Activated CD4-positive, alpha-beta T cell treated with anti-CD3 and anti-CD28 coated beads, Interleukin-2, amount 10 ng/mL, durations not matched to agents 24 days and 14 days (primary cell): ENCODE measurements at regions of chr9 and their contacts with region 1.

Region 1: DNA sequence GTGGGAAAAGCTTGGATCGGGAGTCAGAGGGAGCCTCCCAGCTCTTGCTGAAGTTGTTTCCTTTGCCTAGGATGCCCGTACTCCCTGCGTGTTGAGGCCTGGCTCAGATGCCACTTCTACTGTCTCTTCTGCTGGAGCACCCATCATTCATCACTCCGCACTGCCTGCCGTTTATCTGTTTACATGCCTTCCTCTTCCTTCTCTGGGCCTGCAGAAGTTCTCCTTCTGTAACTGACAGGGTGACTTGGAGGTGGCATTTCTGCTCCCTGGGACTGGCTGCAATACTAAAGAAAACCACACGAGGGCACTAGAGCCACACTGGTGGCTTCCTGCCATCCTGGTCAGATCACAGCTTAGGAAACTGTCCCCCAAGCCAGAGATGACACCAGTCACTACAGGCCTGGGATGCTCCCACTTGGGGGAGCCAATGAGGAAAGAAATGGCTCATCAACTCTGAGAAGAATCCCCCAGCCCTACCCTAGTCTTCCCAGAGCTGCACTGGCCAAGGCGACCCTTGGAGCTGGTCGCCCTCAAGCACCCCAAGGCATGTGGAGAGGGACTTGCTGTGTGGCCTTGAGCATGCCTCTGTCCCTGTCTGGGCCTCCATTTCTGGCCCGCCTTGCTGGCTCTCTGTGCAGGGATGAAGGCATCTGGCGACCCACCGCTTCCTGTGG is 9.7 kb upstream of the SLC25A51 start:
- DNase-seq: peak; percentile 95
- H3K4me3 Mint-ChIP-seq: no peak overlapping the region
- H3K27ac Mint-ChIP-seq: no peak overlapping the region
- H3K4me1 Mint-ChIP-seq: peaks cover 5% of the 10 kb centered on the region
- H3K27me3 Mint-ChIP-seq: no peaks in the 10 kb centered on the region

Region 2: GRCh38 chr9:37784616-37785483 is 128.8 kb before region 1 on chr9 and contains the start of gene EXOSC3:
- intact Hi-C with region 1: no loop called
- DNase-seq: peak; percentile 97
- H3K4me3 Mint-ChIP-seq: peak within 1 kb of the TSS; percentile 98
- H3K27ac Mint-ChIP-seq: peak within 1 kb of the TSS; percentile 97
- H3K4me1 Mint-ChIP-seq: peaks cover 19% of the 10 kb centered on the region
- H3K27me3 Mint-ChIP-seq: no peaks in the 10 kb centered on the region
- total RNA-seq, gene EXOSC3: 104 and 109 TPM in 2 replicates

Region 3: DNA sequence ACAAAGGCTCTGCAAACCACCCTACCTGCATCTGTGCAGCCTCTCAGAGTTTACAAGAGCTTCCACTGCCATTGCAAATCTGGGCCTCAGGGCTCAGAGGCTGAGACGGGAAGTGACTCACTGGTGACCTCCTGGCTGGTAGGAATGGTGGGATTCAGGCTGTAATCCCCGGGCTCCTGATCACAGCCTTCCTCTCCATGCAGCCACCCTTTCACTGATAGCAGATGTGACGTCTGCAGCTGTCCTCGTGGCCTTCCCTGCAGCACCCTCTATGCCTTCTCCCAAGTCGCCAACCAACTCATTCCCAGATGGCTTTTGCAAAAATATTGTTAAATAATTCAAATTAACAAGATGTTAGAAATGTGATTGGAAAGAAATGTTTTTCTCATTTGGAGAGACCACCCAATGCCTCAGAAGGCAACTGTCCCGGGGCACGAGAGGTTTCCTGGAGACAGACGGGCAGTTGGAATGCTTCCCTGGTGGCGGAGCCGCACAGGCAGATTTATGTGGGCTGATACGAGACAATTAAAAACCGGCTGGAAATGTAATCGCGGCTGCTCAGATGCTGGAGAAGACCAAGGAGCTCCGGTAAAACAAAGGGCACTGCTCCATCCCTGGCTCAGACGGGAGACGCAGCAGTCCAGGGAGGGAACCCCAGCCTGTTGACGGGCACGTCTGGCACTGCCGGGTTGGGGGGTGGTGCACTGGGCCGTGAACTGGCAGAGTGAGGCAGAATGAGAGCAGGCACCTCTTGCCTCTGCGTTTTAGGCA is 24.7 kb after region 1 on chr9:
- intact Hi-C with region 1: loop called (anchors 2 kb)
- DNase-seq: no peak
- H3K4me3 Mint-ChIP-seq: no peak overlapping the region
- H3K27ac Mint-ChIP-seq: no peak overlapping the region
- H3K4me1 Mint-ChIP-seq: no peaks in the 10 kb centered on the region
- H3K27me3 Mint-ChIP-seq: no peaks in the 10 kb centered on the region

Region 4: DNA sequence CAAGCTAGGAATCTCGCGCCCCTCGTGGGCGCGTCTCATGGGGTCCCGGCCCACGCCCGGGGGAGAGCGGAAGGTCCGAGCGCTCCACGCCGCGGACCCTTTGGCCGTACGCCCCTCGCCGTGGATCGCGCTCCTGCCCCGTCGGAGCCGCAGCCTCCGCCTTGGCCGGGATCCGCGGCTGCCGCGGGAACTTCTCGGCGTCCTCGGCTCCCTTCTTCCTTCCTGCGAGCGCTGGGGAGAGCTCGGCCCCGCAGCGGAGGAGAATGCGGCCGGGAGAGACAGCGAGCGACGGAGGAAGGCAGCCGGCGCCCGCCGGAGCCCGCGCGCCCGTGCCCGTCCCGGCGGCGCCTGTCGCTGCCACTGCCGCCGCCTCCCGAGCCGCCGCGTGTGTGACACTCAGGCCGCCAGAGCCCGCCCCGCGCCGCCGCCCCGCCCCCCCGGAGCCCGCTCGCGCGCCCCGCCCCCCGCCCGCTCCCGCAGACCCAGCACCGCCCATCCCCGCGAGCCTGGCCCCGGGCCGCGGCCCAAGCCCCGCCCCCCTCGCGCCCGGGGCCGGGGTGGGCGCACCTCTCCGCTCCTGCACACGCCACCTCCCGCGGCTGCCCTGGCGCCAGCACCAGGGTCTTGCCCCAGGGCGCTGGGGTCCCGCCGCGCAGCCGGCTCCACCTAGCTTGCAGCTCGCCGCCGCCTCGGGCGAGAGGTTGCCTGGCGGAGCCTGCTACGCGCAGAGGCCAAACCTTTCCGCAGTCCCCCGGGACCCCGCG is 155.4 kb after region 1 on chr9 and contains the start of gene SHB:
- intact Hi-C with region 1: loop called (anchors 2 kb)
- DNase-seq: peak; percentile 91
- H3K4me3 Mint-ChIP-seq: peak within 1 kb of the TSS; percentile 82
- H3K27ac Mint-ChIP-seq: no peak within 1 kb of the TSS
- H3K4me1 Mint-ChIP-seq: peaks cover 14% of the 10 kb centered on the region
- H3K27me3 Mint-ChIP-seq: peaks cover 46% of the 10 kb centered on the region
- total RNA-seq, gene SHB: 1.6 and 2.1 TPM in 2 replicates

Region 5: GRCh38 chr9:38088006-38088925 is 174.6 kb after region 1 on chr9:
- intact Hi-C with region 1: loop called (anchors 1 kb)
- DNase-seq: peak; percentile 92
- H3K4me3 Mint-ChIP-seq: no peak overlapping the region
- H3K27ac Mint-ChIP-seq: no peak overlapping the region
- H3K4me1 Mint-ChIP-seq: no peaks in the 10 kb centered on the region
- H3K27me3 Mint-ChIP-seq: peaks cover 19% of the 10 kb centered on the region

Region 6: GRCh38 chr9:38160613-38161215 is 247.1 kb after region 1 on chr9:
- intact Hi-C with region 1: loop called (anchors 1 kb)
- DNase-seq: peak; percentile 88
- H3K4me3 Mint-ChIP-seq: no peak overlapping the region
- H3K27ac Mint-ChIP-seq: no peak overlapping the region
- H3K4me1 Mint-ChIP-seq: peaks cover 3% of the 10 kb centered on the region
- H3K27me3 Mint-ChIP-seq: no peaks in the 10 kb centered on the region

Region 7: DNA sequence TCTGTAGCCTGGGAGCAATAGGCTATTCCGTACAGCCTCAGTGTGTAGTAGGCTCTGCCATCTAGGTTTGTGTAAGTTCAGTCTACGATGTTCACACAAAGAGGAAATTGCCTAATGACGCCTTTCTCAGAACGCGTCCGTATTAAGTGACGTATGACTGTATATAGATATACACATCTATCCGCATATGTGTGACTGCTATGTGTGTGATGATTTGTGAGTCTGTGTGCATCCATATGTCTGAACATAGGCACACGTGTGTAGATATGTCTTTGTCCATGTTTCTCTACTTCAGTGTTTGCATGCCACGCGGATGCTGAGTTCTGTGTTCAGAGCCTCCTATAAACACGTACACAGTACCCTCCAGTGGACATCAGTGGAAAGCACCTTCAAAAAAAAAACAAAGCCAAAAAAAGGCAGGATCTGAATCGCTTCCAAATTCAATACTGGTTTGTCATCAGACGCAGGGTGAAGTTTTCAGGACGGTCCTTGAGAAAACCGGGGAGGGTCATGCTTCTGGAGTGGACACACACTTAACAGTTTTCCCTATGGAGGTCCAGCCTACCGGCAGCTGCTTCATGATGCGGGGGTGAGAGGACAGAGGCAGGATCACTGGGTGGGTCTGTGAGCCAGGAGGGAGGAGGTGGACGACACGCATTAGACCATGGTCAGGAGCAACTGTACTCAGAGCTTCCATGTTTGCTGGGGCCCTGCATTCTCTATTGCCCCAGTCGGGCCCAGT is 449.4 kb after region 1 on chr9:
- intact Hi-C with region 1: loop called (anchors 1 kb)
- DNase-seq: peak; percentile 69
- H3K4me3 Mint-ChIP-seq: peak overlapping the region; percentile 61
- H3K27ac Mint-ChIP-seq: peak overlapping the region; percentile 60
- H3K4me1 Mint-ChIP-seq: peaks cover 4% of the 10 kb centered on the region
- H3K27me3 Mint-ChIP-seq: peaks cover 4% of the 10 kb centered on the region